ENCODE measurements at regions of chr10 and their contacts with region 1.

Region 1: DNA sequence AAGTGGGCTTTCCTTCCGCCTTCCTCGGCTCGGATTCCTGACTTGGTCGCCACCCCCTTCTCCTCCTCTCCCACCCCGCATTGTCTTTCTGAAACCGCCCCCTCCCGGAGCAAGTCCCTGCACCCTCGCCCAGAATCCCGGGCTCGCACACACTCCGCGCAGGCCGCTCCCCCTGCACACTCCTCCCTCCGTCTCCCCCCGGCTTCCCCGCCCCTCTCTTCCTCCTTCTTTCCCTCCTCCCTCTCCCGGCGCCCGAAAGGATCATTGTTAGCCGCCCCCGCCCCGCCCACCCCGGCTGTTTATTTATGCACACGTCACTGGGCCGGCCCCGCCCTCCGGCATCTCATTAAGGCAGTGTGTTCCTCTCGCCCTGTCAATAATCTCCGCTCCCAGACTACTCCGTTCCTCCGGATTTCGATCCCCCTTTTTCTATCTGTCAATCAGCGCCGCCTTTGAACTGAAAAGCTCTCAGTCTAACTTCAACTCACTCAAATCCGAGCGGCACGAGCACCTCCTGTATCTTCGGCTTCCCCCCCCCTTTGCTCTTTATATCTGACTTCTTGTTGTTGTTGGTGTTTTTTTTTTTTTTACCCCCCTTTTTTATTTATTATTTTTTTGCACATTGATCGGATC is at the start of gene TCF7L2:
- DNase-seq: peak; percentile 97
- ATAC-seq: peak; percentile 95
- total RNA-seq, gene TCF7L2: 53.6 TPM

Region 2: DNA sequence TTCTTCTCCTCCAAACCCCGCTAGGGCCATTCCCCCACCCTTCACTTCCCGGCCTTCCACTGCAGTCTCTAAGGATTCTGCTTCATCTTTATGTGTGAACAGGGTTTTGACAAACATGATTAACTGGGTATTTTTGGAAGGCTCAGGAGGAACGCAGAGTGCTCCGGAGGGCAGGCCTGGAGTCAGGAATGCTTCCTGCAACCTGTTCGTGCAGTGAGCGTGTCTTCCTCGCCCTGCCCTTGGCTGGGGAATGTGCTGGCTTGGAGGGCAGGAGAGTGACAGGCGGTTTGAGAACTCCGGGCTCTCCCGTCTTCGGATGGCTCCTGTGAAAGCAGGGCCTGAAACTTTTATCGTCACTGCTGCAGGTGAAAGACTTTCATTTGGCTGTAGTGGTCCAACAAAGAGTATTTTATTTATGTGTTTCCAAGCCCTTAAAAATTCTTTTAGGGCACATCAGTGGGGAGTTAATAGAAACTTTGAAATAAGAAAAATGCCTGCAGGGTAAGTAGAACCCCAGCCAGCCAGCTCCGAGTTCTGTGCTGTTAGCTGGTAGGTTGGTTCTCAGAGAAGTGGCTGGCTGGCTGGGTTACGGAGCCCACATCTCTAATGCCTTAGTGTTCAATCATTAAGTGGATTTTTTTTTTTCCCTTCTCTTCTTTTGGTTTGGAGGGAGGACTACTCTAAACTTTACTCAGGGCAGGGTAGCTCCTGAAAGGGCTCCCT is 51.0 kb after region 1 on chr10:
- intact Hi-C with region 1: loop called (anchors 10 kb)
- DNase-seq: no peak
- ATAC-seq: no peak

Region 3: DNA sequence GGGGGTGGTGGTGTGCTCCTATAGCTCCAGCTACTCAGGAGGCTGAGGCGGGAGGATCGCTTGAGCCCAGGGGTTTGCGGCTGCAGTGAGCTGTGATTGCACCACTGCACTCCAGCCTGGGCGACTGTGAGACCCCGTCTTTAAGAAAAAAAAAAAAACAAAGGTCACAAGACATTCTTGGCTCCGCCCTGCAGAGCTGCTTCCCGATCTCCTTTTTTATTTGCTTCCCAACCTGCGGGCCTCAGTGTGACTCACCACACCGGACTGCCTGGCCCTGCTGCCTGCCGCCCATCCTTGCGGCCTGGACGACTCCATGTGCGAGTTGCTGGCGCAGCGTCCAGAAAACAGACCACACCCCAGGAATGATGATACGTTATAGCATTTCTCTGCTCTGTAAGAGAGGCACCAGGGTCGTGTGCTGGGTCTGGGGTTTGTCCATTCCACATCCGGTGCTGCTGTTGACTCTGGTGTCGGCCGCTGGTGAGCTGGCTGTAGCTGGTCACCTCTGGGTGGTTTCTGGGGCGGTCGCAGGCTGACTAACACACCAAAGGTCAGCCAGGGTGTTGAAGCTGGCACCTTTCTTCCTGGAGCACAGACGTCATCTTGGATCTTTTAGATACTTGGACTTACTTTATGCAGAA is 123.7 kb after region 1 on chr10:
- intact Hi-C with region 1: loop called (anchors 10 kb)
- DNase-seq: peak; percentile 69
- ATAC-seq: peak; percentile 85

Region 4: GRCh38 chr10:113126229-113127201 is 176.5 kb after region 1 on chr10:
- intact Hi-C with region 1: loop called (anchors 10 kb)
- DNase-seq: peak; percentile 77
- ATAC-seq: peak; percentile 87

Measured in sciatic nerve (tissue), 2 donors.